ENCODE measurements at regions of chr17 and their contacts with region 1.

Region 1: GRCh38 chr17:48625495-48626244 is 488 bp downstream of the HOXB9 start:
- DNase-seq: peak; percentile 91
- H3K4me3 ChIP-seq: peak overlapping the region; percentile 48
- H3K27ac ChIP-seq: peak overlapping the region; percentile 82
- H3K4me1 ChIP-seq: peaks cover 8% of the 10 kb centered on the region
- H3K27me3 ChIP-seq: peaks cover 42% of the 10 kb centered on the region
- CTCF ChIP-seq: no peak

Region 2: GRCh38 chr17:48153691-48154358 is 471.8 kb before region 1 on chr17:
- intact Hi-C with region 1: loop called (anchors 10 kb)
- DNase-seq: peak; percentile 74
- H3K4me3 ChIP-seq: no peak overlapping the region
- H3K27ac ChIP-seq: peak overlapping the region; percentile 51
- H3K4me1 ChIP-seq: no peaks in the 10 kb centered on the region
- H3K27me3 ChIP-seq: no peaks in the 10 kb centered on the region
- CTCF ChIP-seq: peak; percentile 44

Region 3: DNA sequence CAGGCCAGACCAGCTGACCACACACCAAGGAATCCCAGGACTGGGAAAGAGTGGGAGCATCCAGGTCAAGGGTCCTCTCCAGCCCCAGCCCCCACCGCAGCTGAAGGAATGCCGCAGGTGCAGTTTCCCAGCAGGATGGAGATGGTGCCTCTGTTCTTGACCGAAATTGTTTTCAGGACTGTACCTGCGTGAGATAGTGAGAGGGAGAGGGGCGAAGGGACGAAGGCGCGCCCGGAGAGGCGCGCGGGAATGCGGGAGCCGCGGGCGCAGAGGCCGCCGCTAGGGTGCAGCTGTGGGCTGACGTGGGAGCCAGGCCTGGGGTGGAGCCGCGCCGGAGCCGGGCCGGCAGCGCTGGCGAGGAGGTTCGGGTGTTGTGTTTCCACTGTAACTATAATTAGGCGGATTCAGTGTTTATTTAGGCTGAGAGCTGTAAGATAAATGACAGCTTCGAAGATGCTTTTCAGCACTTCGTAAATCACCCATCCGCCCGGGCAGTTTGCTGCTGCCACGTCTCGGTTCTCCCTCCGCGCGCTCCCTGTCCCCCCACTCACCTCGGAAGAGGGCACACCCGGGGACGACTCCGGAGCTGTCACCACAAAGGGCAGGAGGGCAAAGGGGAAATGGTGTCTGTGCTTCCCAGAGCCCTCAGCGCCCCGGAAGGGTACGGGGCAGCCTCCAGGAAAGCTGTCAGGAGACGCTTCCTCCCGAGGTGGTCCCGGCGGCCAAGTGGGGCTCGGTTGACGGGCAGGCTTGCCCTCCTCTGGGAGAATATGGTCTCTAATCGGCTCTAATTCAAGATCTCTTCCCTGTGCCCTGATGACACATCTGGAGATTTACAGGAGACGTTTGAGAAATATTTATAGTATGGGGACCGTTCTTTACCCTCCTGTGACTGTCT is 133.0 kb before region 1 on chr17:
- intact Hi-C with region 1: no loop called
- DNase-seq: peak; percentile 79
- H3K4me3 ChIP-seq: peak overlapping the region; percentile 26
- H3K27ac ChIP-seq: no peak overlapping the region
- H3K4me1 ChIP-seq: peaks cover 5% of the 10 kb centered on the region
- H3K27me3 ChIP-seq: no peaks in the 10 kb centered on the region
- CTCF ChIP-seq: peak; percentile 87

Measured in colonic mucosa (tissue), 4 donors.